ENCODE measurements at regions of chr4 and their contacts with region 1.

Region 1: GRCh38 chr4:145481164-145481941 is at the start of gene SMAD1:
- DNase-seq: peak; percentile 87
- H3K4me3 ChIP-seq: peak within 1 kb of the TSS; percentile 60 to 75 (median 66)
- H3K27ac ChIP-seq: peak within 1 kb of the TSS; percentile 61
- H3K4me1 ChIP-seq: peaks cover 19% of the 10 kb centered on the region
- H3K27me3 ChIP-seq: no peaks in the 10 kb centered on the region
- CTCF ChIP-seq: no peak
- total RNA-seq, gene SMAD1: 30.0 to 43.2 TPM

Region 2: GRCh38 chr4:145180298-145181090 is 300.9 kb before region 1 on chr4 and contains the start of gene OTUD4:
- CTCF ChIA-PET with region 1: no interaction called
- dilution Hi-C with region 1: no loop called
- in situ Hi-C with region 1: no loop called
- intact Hi-C with region 1: loop called (anchors 1 kb)
- DNase-seq: peak; percentile 93
- H3K4me3 ChIP-seq: peak within 1 kb of the TSS; percentile 69 to 86 (median 72)
- H3K27ac ChIP-seq: peak within 1 kb of the TSS; percentile 88
- H3K4me1 ChIP-seq: peaks cover 18% of the 10 kb centered on the region
- H3K27me3 ChIP-seq: no peaks in the 10 kb centered on the region
- CTCF ChIP-seq: peak in 1 of 2 donors; percentile 26
- total RNA-seq, gene OTUD4: 32.3 to 49.1 TPM

Region 3: DNA sequence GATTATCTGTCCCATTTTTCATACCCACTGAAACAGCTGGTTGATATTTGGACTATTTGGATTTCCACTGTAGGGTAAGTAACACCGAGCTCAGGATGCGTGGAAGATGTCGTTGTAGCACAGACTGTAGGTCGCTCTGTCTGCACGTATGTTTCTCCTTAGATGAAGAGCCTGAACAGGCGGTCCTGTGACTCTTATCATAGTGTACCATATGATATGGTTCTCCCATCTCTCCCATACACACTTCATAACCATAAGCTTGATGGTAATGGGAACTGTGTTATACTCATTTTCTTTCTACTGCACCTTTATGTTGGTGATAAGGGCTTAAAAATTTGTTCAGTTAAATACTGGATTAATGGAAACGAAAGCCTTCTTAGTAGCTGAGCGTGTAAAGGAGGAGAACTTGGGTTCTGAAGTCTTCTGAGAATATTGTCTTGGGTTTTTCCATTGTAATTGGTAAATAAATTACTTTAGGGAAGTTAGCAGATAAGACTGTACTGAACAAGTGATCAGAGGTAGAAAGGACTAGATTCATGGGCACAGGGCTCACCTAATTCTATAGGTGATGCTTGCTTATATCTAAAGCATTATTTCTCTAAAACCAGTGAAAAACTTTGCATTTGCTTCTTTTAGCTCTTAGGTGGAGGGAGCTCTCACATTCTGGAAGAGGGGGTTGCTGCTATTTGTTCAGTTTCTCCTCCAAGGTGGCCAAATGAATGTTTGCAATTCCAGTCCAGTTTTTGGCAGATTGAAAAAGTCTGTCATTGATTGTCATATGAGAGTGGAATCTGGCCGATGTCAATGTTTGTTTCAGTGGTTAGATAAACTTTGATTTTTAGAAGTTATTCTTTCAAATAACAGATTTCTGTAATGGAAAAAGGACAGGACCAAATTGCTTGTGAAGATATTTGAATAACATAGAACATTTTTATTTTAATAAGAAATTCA is 16.1 kb after region 1 on chr4:
- CTCF ChIA-PET with region 1: no interaction called
- dilution Hi-C with region 1: no loop called
- in situ Hi-C with region 1: no loop called
- intact Hi-C with region 1: loop called (anchors 2 kb)
- DNase-seq: no peak
- H3K4me3 ChIP-seq: no peak overlapping the region
- H3K27ac ChIP-seq: no peak overlapping the region
- H3K4me1 ChIP-seq: no peaks in the 10 kb centered on the region
- H3K27me3 ChIP-seq: no peaks in the 10 kb centered on the region
- CTCF ChIP-seq: no peak

Region 4: GRCh38 chr4:145545538-145546174 is 64.3 kb after region 1 on chr4:
- CTCF ChIA-PET with region 1: no interaction called
- dilution Hi-C with region 1: no loop called
- in situ Hi-C with region 1: no loop called
- intact Hi-C with region 1: loop called (anchors 2 kb)
- DNase-seq: peak; percentile 97
- H3K4me3 ChIP-seq: peak overlapping the region in 1 of 3 experiments; percentile 26
- H3K27ac ChIP-seq: peak overlapping the region; percentile 87
- H3K4me1 ChIP-seq: peaks cover 30% of the 10 kb centered on the region
- H3K27me3 ChIP-seq: no peaks in the 10 kb centered on the region
- CTCF ChIP-seq: no peak

Region 5: GRCh38 chr4:145609481-145610427 is 128.4 kb after region 1 on chr4:
- CTCF ChIA-PET with region 1: no interaction called
- dilution Hi-C with region 1: no loop called
- in situ Hi-C with region 1: no loop called
- intact Hi-C with region 1: loop called (anchors 1 kb)
- DNase-seq: peak; percentile 46
- H3K4me3 ChIP-seq: no peak overlapping the region
- H3K27ac ChIP-seq: no peak overlapping the region
- H3K4me1 ChIP-seq: no peaks in the 10 kb centered on the region
- H3K27me3 ChIP-seq: no peaks in the 10 kb centered on the region
- CTCF ChIP-seq: peak; percentile 81 to 84